Activated CD4-positive, alpha-beta T cell treated with anti-CD3 and anti-CD28 coated beads, Interleukin-2, amount 10 ng/mL, durations not matched to agents 24 days and 14 days (primary cell): ENCODE measurements at regions of chr5 and their contacts with region 1.

Region 1: GRCh38 chr5:141512390-141512910 is 23.6 kb downstream of the PCDHGC5 start:
- DNase-seq: peak; percentile 95
- H3K4me3 Mint-ChIP-seq: peak overlapping the region; percentile 84
- H3K27ac Mint-ChIP-seq: peak overlapping the region; percentile 87
- H3K4me1 Mint-ChIP-seq: peaks cover 31% of the 10 kb centered on the region
- H3K27me3 Mint-ChIP-seq: no peaks in the 10 kb centered on the region

Region 2: DNA sequence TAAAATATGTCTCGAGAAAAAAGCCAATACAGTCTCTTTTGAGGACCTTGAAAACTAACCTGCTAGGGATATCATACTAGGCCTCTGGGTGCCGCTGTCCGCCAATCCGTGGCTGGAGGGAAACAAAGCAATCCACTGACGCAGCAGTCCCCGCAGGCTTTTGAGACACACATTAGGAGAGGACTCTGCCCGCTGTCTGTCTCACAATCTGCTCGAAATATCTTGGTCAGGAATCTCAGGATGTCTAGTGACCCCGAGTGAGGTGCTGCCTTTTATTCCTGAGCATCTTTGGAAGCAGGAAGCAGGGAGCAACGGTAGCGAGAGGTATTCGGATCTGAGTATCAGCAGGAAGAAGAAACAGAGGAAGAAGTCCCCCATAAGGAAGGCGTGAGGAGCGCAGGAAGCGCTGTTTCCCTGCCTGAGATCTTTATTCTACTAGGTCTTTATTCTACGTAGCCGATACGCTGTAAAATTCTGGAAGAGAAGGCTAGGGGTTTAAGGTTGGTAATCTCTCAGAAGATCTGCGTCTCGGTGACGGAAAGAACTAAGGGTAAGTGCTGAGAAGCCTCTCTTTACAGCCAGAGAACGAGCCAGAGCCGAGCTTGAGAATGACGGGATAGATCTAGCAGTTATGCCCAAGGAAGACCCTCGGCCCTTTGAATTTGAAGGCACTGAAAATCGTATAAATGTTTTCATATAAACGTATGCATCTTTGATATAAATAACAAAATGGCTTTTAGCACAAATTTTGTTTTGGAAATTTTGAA is 186.2 kb before region 1 on chr5:
- intact Hi-C with region 1: loop called (anchors 1 kb)
- DNase-seq: peak; percentile 90
- H3K4me3 Mint-ChIP-seq: peak overlapping the region; percentile 92
- H3K27ac Mint-ChIP-seq: peak overlapping the region; percentile 90
- H3K4me1 Mint-ChIP-seq: peaks cover 8% of the 10 kb centered on the region
- H3K27me3 Mint-ChIP-seq: peaks cover 12% of the 10 kb centered on the region

Region 3: GRCh38 chr5:141412854-141413539 is 99.5 kb before region 1 on chr5 and contains the start of gene PCDHGA10:
- intact Hi-C with region 1: loop called (anchors 5 kb)
- DNase-seq: peak; percentile 86
- H3K4me3 Mint-ChIP-seq: peak within 1 kb of the TSS; percentile 86
- H3K27ac Mint-ChIP-seq: no peak within 1 kb of the TSS
- H3K4me1 Mint-ChIP-seq: peaks cover 12% of the 10 kb centered on the region
- H3K27me3 Mint-ChIP-seq: peaks cover 51% of the 10 kb centered on the region
- total RNA-seq, gene PCDHGA10: 0.07 and 0.21 TPM in 2 replicates

Region 4: DNA sequence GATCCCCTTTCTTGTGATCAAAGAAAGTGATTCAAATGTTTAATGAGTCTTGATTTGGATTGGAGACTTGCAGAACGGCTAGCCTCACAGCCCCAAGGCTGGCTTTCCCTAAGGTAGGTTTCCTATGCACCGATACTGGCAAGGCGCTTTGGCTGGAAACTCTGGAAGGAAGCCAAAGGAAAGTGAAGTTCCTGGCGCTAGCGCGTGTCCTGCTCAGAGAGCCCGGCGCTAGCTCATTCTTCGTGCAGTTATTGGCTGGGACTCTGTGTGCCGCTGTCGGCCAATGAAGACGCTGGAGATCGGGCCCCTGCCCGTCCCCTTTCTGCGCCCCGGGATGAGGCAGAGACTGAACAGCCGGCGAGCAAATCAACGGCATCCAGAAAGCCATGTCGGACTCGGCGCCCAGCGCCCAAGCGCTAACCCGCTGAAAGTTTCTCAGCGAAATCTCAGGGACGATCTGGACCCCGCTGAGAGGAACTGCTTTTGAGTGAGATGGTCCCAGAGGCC is 36.8 kb before region 1 on chr5 and contains the start of gene PCDHGC3:
- intact Hi-C with region 1: loop called (anchors 2 kb)
- DNase-seq: peak; percentile 78
- H3K4me3 Mint-ChIP-seq: peak within 1 kb of the TSS; percentile 91
- H3K27ac Mint-ChIP-seq: no peak within 1 kb of the TSS
- H3K4me1 Mint-ChIP-seq: peaks cover 18% of the 10 kb centered on the region
- H3K27me3 Mint-ChIP-seq: peaks cover 60% of the 10 kb centered on the region
- total RNA-seq, gene PCDHGC3: 0.24 and 0.58 TPM in 2 replicates

Region 5: DNA sequence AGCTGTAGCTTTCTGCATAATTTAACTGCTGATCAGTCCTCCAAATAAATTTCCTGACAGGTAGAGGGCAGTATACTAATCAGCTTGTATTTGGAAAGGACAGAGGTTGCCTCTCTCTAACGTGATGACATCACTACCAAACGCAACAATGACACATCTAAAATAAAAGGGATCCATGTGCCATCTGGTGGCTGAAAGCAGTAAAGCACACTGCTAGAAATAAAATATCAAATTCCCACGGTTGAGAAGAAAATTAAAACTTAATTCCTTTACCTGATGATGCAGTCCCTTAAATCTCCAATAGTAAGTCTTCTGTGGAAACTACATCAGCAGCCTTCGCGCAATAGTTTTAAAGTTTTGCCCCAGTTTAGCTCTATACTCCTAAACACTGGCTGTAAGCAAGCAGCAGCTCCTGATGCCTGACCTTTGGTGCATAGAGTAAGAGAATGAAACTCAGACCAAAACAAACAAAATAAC is 51.8 kb after region 1 on chr5:
- intact Hi-C with region 1: loop called (anchors 5 kb)
- DNase-seq: peak; percentile 92
- H3K4me3 Mint-ChIP-seq: no peak overlapping the region
- H3K27ac Mint-ChIP-seq: peak overlapping the region; percentile 86
- H3K4me1 Mint-ChIP-seq: peaks cover 32% of the 10 kb centered on the region
- H3K27me3 Mint-ChIP-seq: no peaks in the 10 kb centered on the region